T-cell (primary cell): ENCODE measurements at regions of chr18 and their contacts with region 1.

Region 1: GRCh38 chr18:48673853-48674721 is 135.3 kb downstream of the CTIF start:
- DNase-seq: no peak
- ATAC-seq: no peak
- H3K4me3 ChIP-seq: no peak overlapping the region
- H3K4me3 Mint-ChIP-seq: no peak overlapping the region
- H3K27ac ChIP-seq: no peak overlapping the region
- H3K27ac Mint-ChIP-seq: no peak overlapping the region
- H3K4me1 ChIP-seq: peaks cover 0 to 10% of the 10 kb centered on the region in 2 experiments
- H3K4me1 Mint-ChIP-seq: peaks cover 0 to 3% (median 2%) of the 10 kb centered on the region in 3 donors
- H3K27me3 ChIP-seq: peaks cover 0 to 21% of the 10 kb centered on the region in 2 experiments
- H3K27me3 Mint-ChIP-seq: peaks cover 0 to 5% of the 10 kb centered on the region in 2 donors

Region 2: GRCh38 chr18:48391868-48392267 is 282.2 kb before region 1 on chr18:
- CTCF ChIA-PET with region 1: no interaction called
- POLR2A ChIA-PET with region 1: no interaction called
- DNase-seq: no peak
- ATAC-seq: no peak
- H3K4me3 ChIP-seq: no peak overlapping the region
- H3K4me3 Mint-ChIP-seq: no peak overlapping the region
- H3K27ac ChIP-seq: no peak overlapping the region
- H3K27ac Mint-ChIP-seq: no peak overlapping the region
- H3K4me1 ChIP-seq: no peaks in the 10 kb centered on the region
- H3K4me1 Mint-ChIP-seq: no peaks in the 10 kb centered on the region
- H3K27me3 ChIP-seq: peaks cover 2 to 17% of the 10 kb centered on the region in 2 experiments
- H3K27me3 Mint-ChIP-seq: peaks cover 58 to 74% of the 10 kb centered on the region in 2 donors

Region 3: GRCh38 chr18:49059028-49059834 is 385.1 kb after region 1 on chr18:
- CTCF ChIA-PET with region 1: interaction called in 1 of 2 experiments, 13 read pairs
- POLR2A ChIA-PET with region 1: no interaction called
- DNase-seq: no peak
- ATAC-seq: no peak
- H3K4me3 ChIP-seq: no peak overlapping the region
- H3K4me3 Mint-ChIP-seq: no peak overlapping the region
- H3K27ac ChIP-seq: no peak overlapping the region
- H3K27ac Mint-ChIP-seq: no peak overlapping the region
- H3K4me1 ChIP-seq: peaks cover 0 to 9% of the 10 kb centered on the region in 2 experiments
- H3K4me1 Mint-ChIP-seq: peaks cover 19 to 34% (median 32%) of the 10 kb centered on the region in 3 donors
- H3K27me3 ChIP-seq: no peaks in the 10 kb centered on the region
- H3K27me3 Mint-ChIP-seq: no peaks in the 10 kb centered on the region

Region 4: GRCh38 chr18:49258938-49259337 is 584.9 kb after region 1 on chr18:
- CTCF ChIA-PET with region 1: no interaction called
- POLR2A ChIA-PET with region 1: no interaction called
- DNase-seq: no peak
- ATAC-seq: no peak
- H3K4me3 ChIP-seq: no peak overlapping the region
- H3K4me3 Mint-ChIP-seq: no peak overlapping the region
- H3K27ac ChIP-seq: no peak overlapping the region
- H3K27ac Mint-ChIP-seq: no peak overlapping the region
- H3K4me1 ChIP-seq: no peaks in the 10 kb centered on the region
- H3K4me1 Mint-ChIP-seq: peaks cover 0 to under 1% (median 0%) of the 10 kb centered on the region in 3 donors
- H3K27me3 ChIP-seq: no peaks in the 10 kb centered on the region
- H3K27me3 Mint-ChIP-seq: no peaks in the 10 kb centered on the region